ENCODE measurements at regions of chr6 and their contacts with region 1.

Region 1: GRCh38 chr6:3281631-3282475 is 23.1 kb downstream of the PSMG4 start:
- DNase-seq: peak; percentile 85
- ATAC-seq: peak; percentile 53
- H3K4me3 ChIP-seq: no peak overlapping the region
- H3K27ac ChIP-seq: peak overlapping the region; percentile 7; the same call in 1 of the 2 replicates
- H3K4me1 ChIP-seq: peaks cover 18% of the 10 kb centered on the region
- H3K27me3 ChIP-seq: no peaks in the 10 kb centered on the region
- CTCF ChIP-seq: no peak
- POLR2A ChIP-seq: no peak
- RAD21 ChIP-seq: no peak

Region 2: DNA sequence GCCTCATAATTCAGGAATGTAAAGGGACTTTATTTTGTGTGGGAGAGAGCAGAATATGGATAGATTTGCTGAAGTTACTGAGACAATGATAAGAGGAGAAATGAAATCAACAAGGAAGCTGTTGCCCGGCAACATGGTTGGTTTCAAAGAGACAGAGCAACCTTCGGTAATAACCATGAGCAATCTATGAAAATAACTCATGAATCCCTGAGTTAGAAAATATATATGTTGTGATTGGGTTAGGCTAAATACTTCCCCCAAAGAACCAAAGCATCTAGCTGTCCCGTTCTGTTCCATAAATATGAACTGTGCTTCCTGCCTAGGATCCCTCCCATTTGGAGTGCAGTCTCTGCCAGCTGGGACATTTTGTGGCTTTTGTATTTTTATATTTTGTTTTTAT is 463.3 kb before region 1 on chr6:
- CTCF ChIA-PET with region 1: no interaction called
- POLR2A ChIA-PET with region 1: no interaction called
- dilution Hi-C with region 1: no loop called
- in situ Hi-C with region 1: no loop called
- intact Hi-C with region 1: no loop called
- DNase-seq: peak; percentile 66
- ATAC-seq: peak; percentile 40
- H3K4me3 ChIP-seq: no peak overlapping the region
- H3K27ac ChIP-seq: no peak overlapping the region
- H3K4me1 ChIP-seq: peaks cover 6% of the 10 kb centered on the region
- H3K27me3 ChIP-seq: no peaks in the 10 kb centered on the region
- CTCF ChIP-seq: no peak
- POLR2A ChIP-seq: no peak
- RAD21 ChIP-seq: no peak

Region 3: GRCh38 chr6:2952557-2953095 is 329.2 kb before region 1 on chr6:
- CTCF ChIA-PET with region 1: no interaction called
- POLR2A ChIA-PET with region 1: no interaction called
- dilution Hi-C with region 1: no loop called
- in situ Hi-C with region 1: no loop called
- intact Hi-C with region 1: no loop called
- DNase-seq: peak; percentile 91
- ATAC-seq: peak; percentile 99
- H3K4me3 ChIP-seq: no peak overlapping the region
- H3K27ac ChIP-seq: peak overlapping the region; percentile 25
- H3K4me1 ChIP-seq: peaks cover 3% of the 10 kb centered on the region; the same call in 1 of the 2 replicates
- H3K27me3 ChIP-seq: no peaks in the 10 kb centered on the region
- CTCF ChIP-seq: peak; percentile 94
- POLR2A ChIP-seq: no peak
- RAD21 ChIP-seq: peak; percentile 80

Region 4: GRCh38 chr6:3147914-3148757 is 133.7 kb before region 1 on chr6:
- CTCF ChIA-PET with region 1: no interaction called
- POLR2A ChIA-PET with region 1: no interaction called
- dilution Hi-C with region 1: no loop called
- in situ Hi-C with region 1: no loop called
- intact Hi-C with region 1: no loop called
- DNase-seq: no peak
- ATAC-seq: no peak
- H3K4me3 ChIP-seq: no peak overlapping the region
- H3K27ac ChIP-seq: no peak overlapping the region
- H3K4me1 ChIP-seq: no peaks in the 10 kb centered on the region
- H3K27me3 ChIP-seq: no peaks in the 10 kb centered on the region
- CTCF ChIP-seq: no peak
- POLR2A ChIP-seq: no peak
- RAD21 ChIP-seq: no peak

Region 5: DNA sequence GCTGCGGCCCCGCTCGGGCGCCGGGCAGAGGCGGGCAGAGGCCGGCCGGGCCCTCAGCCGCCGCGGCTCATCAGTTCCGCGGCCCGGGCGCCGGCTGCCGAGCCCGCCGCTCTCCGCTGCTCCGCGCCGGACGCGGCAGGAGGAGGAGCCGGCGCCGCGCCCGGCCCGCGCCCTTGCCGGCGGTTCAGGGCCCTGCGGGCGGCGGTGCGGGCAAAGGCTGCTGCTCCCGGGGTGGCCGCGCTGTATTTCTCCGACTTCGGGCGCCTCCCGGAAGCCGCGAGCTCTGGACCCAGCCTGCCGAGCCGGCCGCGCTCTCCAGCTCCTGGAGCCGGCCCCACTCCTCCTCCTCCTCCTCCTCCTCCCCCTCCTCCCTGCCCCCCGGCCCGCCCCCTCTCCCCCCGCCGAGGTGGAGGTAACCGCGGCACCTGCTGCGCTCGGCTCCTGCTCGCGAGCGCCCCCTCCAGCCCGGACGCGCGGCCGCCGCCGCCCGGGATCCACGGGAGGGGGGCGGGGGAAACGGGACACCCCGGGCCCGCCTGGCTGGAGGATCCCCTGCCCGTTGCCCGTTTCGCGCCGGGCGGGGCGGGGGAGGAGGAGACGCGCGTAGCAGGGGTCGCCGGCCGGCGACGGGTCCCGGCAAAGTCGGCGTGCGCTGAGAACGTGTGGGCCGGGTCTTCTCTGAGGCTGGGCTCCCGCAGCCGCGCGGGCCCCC is 175.1 kb after region 1 on chr6 and contains the start of gene SLC22A23:
- CTCF ChIA-PET with region 1: no interaction called
- POLR2A ChIA-PET with region 1: no interaction called
- dilution Hi-C with region 1: no loop called
- in situ Hi-C with region 1: no loop called
- intact Hi-C with region 1: loop called (anchors 1 kb)
- DNase-seq: no peak
- ATAC-seq: peak; percentile 72
- H3K4me3 ChIP-seq: peak within 1 kb of the TSS; percentile 36
- H3K27ac ChIP-seq: no peak within 1 kb of the TSS
- H3K4me1 ChIP-seq: peaks cover 2% of the 10 kb centered on the region; the same call in 1 of the 2 replicates
- H3K27me3 ChIP-seq: peaks cover 63% of the 10 kb centered on the region
- CTCF ChIP-seq: peak; percentile 59
- POLR2A ChIP-seq: no peak
- RAD21 ChIP-seq: peak; percentile 41
- total RNA-seq, gene SLC22A23: 0.56 and 0.72 TPM in 2 replicates

Region 6: GRCh38 chr6:3732345-3733141 is 450.7 kb after region 1 on chr6:
- CTCF ChIA-PET with region 1: interaction called, 6 read pairs
- POLR2A ChIA-PET with region 1: no interaction called
- dilution Hi-C with region 1: no loop called
- in situ Hi-C with region 1: loop called (anchors 5 kb)
- intact Hi-C with region 1: loop called (anchors 1 kb)
- DNase-seq: peak; percentile 94
- ATAC-seq: peak; percentile 93
- H3K4me3 ChIP-seq: no peak overlapping the region
- H3K27ac ChIP-seq: no peak overlapping the region; the same call in 1 of the 2 replicates
- H3K4me1 ChIP-seq: peaks cover 7% of the 10 kb centered on the region
- H3K27me3 ChIP-seq: no peaks in the 10 kb centered on the region
- CTCF ChIP-seq: peak; percentile 93
- POLR2A ChIP-seq: no peak; the same call in 1 of the 2 replicates
- RAD21 ChIP-seq: peak; percentile 97

Region 7: GRCh38 chr6:3990692-3991501 is 709.0 kb after region 1 on chr6:
- CTCF ChIA-PET with region 1: no interaction called
- POLR2A ChIA-PET with region 1: no interaction called
- dilution Hi-C with region 1: no loop called
- in situ Hi-C with region 1: no loop called
- intact Hi-C with region 1: loop called (anchors 5 kb)
- DNase-seq: peak; percentile 88
- ATAC-seq: peak; percentile 96
- H3K4me3 ChIP-seq: peak overlapping the region; percentile 5; the same call in 1 of the 2 replicates
- H3K27ac ChIP-seq: peak overlapping the region; percentile 11; the same call in 1 of the 2 replicates
- H3K4me1 ChIP-seq: peaks cover 6% of the 10 kb centered on the region
- H3K27me3 ChIP-seq: no peaks in the 10 kb centered on the region
- CTCF ChIP-seq: peak; percentile 97
- POLR2A ChIP-seq: no peak
- RAD21 ChIP-seq: peak; percentile 94